Thyroid gland (tissue), 4 donors: ENCODE measurements at regions of chr19 and their contacts with region 1.

Region 1: DNA sequence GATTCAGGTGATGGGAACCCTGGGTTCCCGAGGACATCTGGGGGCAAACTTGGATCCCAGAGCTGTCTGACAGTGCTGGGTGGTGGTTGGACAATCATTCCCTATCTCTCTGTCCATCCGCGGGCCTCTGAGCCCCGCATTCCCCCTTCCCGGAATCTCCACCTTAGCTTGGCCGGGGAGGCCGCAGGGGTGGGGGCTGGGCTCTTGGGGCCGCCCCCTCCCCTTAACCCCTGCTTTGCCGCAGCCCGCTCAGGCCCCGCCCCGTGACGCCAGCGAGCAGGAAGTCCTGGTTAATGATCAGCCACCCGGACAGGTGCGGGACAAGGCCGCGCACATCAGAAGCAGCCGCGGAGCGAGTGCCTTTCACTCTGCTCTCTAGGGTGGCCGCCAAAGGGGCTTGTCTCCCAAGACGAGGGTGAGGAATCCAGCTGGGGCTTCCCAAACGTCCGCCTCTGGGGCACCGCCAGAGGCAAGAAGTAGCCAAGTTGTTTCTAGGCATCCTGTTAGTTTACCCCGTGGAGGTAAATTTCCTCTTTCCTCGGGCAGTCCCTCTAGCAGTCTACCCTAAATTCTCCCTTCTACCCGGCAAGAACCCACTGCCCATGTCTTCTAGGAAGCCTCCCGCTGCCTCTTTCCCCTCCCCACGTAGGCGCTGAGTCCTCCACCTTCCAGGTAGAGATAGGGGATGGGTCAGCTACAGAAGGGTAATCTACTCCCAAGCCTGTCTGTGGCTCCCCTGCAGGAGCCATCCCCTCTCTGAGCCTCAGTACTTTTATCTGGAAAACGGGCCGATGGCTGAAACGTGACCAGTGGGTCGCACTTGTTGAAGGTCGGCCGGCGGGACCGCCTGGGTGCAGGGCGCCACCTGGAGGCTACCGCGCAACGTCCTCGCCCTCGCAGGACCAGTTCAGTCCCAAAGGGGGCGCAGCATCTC is 3.0 kb downstream of the IRF2BP1 start:
- DNase-seq: peak; percentile 77 to 81
- H3K4me3 ChIP-seq: no peak overlapping the region
- H3K27ac ChIP-seq: no peak overlapping the region
- H3K4me1 ChIP-seq: peaks cover 31 to 34% of the 10 kb centered on the region in 2 donors
- H3K27me3 ChIP-seq: no peaks in the 10 kb centered on the region
- CTCF ChIP-seq: peak; percentile 61 to 92 (median 87)
- POLR2A ChIP-seq: no peak

Region 2: GRCh38 chr19:45817010-45817724 is 65.8 kb before region 1 on chr19:
- intact Hi-C with region 1: loop called (anchors 5 kb)
- DNase-seq: peak; percentile 93 to 95
- H3K4me3 ChIP-seq: no peak overlapping the region
- H3K27ac ChIP-seq: no peak overlapping the region
- H3K4me1 ChIP-seq: peaks cover 0 to 4% of the 10 kb centered on the region in 2 donors
- H3K27me3 ChIP-seq: no peaks in the 10 kb centered on the region
- CTCF ChIP-seq: peak; percentile 93 to 99 (median 97)
- POLR2A ChIP-seq: no peak